Dendritic cell treated with granulocyte-macrophage colony-stimulating factor and Interleukin-4, amounts not matched to agents 40 ng/mL and 50 ng/mL, for 4 days (primary cell): ENCODE measurements at regions of chr1 and their contacts with region 1.

Region 1: DNA sequence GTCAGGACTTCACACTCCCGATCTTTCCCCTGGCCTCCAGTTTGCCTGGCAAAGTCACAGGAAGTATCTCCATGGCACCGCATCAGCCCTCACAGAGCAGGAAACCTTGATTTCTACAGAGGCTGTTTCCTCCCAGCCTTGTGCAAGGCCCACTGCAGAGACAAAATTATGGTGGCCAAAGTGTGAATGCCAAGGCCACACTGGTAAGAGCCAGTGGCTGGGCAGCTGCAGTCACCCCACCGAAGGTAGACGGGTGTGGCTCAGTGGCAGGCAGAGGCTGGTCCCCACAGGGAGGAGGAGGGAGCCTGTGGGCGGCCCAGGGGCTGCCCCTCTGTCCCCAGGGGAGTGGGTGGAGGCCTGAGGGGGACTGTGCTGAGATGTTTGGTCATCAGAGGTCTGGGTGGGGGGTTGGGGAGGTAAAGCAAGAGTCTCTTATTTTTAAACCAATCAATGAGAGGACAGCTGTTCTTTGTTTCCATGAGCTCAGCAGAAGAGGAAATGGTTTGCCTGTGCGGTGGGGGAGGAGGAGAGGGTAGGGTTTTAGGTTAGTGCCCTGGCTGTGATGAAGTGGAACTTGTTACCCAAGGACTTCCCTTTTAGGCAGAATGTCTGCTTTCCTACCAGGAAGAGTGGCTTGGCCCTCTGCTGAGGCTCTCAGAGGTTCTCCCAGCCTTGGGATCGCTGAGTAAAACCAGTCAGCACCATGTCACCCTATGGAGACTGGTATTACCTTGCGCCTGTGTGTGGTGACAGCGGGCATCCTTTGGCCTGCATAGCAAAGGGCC is 18.0 kb upstream of the BTG2 start:
- H3K4me3 Mint-ChIP-seq: peak overlapping the region; percentile 55
- H3K27ac Mint-ChIP-seq: peak overlapping the region; percentile 90
- H3K4me1 Mint-ChIP-seq: peaks cover 88% of the 10 kb centered on the region
- H3K27me3 Mint-ChIP-seq: no peaks in the 10 kb centered on the region

Region 2: GRCh38 chr1:203017692-203018091 is 269.6 kb before region 1 on chr1:
- intact Hi-C with region 1: no loop called
- H3K4me3 Mint-ChIP-seq: no peak overlapping the region
- H3K27ac Mint-ChIP-seq: no peak overlapping the region
- H3K4me1 Mint-ChIP-seq: peaks cover 7% of the 10 kb centered on the region
- H3K27me3 Mint-ChIP-seq: no peaks in the 10 kb centered on the region

Region 3: DNA sequence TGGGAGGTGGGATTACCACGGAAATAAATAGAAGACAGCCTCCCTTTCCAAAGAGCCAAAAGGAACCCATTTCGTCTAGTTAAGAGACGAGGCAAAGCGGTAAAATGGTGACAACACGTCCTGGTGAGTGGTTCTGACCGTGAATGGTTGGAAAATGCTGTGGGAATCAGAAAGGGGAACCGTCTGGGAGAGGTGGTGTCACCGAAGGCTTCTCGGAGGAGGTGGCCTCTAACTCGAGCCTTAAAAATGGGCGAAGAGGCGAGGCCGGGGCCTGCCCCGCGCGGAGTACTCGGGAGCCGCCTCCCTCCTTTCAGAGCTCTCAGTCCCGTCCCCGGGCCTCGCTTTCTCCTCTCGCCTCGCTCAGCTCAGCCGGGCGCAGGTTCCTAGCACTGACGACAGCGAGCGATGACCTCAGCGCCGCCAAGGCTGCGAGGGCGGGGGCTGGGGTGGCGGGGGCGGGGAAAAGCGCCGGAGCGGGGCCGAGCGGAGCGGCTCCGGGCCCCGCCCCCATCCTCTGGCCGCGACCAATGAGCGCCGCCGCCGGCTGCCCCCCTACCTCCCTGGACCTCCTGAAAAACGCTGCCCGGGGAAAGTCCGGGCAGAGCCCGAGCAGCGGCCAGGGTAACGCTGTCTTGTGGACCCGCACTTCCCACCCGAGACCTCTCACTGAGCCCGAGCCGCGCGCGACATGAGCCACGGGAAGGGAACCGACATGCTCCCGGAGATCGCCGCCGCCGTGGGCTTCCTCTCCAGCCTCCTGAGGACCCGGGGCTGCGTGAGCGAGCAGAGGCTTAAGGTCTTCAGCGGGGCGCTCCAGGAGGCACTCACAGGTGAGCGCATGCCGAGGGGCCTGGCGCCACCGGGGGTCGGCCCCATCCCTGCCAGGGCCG is 17.9 kb after region 1 on chr1 and contains the start of gene BTG2:
- intact Hi-C with region 1: loop called (anchors 1 kb)
- H3K4me3 Mint-ChIP-seq: peak within 1 kb of the TSS; percentile 97
- H3K27ac Mint-ChIP-seq: peak within 1 kb of the TSS; percentile 96
- H3K4me1 Mint-ChIP-seq: peaks cover 67% of the 10 kb centered on the region
- H3K27me3 Mint-ChIP-seq: no peaks in the 10 kb centered on the region

Region 4: GRCh38 chr1:203326830-203327683 is 39.8 kb after region 1 on chr1:
- intact Hi-C with region 1: loop called (anchors 1 kb)
- H3K4me3 Mint-ChIP-seq: peak overlapping the region; percentile 71
- H3K27ac Mint-ChIP-seq: peak overlapping the region; percentile 95
- H3K4me1 Mint-ChIP-seq: peaks cover 81% of the 10 kb centered on the region
- H3K27me3 Mint-ChIP-seq: no peaks in the 10 kb centered on the region